ENCODE measurements at regions of chr3 and their contacts with region 1.

Region 1: DNA sequence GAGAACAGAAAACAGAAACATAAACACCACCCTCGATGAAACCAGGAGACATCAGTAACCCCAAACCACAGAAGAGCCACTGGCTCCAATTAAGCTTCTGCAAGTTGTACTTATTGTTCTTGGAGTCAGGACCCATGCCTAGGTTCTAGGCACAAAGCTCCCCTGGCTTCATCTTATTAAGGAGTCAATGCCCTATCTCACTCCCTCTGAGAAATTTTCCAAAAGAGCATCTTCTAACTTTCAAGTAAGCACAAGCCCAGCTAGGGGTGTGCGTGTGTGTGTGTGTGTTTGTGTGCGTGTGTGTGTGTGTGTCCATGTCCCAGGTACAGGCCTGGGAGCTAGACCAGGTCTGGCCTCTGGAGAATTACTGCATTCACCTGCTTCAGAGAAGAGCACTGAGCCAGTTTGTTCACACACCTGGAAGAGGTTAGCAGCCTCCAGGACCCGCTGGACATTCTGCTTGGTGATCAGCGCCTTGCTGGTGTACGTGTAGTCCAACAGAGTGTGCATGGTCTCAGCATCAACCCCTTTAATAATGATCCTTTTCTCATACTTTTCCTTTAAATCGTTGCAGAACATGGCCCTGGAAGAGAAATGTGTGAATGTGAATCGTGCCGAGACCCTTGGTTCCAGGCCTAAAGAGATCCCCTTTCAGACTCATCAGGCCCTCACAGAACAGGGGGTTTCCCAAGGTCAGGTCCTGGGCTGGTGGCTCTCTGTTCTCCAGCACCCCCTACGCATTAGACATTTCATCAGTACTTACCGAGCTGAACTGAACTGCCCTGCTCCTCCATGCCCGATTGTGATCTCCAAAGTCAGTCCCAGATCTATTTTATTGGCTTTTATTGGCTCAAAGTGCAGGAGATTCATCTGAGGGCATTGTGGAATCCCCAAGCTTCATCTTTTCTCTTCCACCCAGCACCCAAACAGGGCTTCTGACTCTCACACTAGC is 27.8 kb downstream of the KLHL6 start:
- DNase-seq: peak; percentile 73
- ATAC-seq: peak; percentile 82
- H3K4me3 ChIP-seq: no peak overlapping the region; the same call in 1 of the 2 replicates
- H3K27ac ChIP-seq: peak overlapping the region; percentile 67
- H3K4me1 ChIP-seq: peaks cover 39% of the 10 kb centered on the region
- H3K27me3 ChIP-seq: no peaks in the 10 kb centered on the region
- CTCF ChIP-seq: no peak
- EP300 ChIP-seq: peak; percentile 93 to 96
- POLR2A ChIP-seq: no peak
- RAD21 ChIP-seq: peak; percentile 16; the same call in 1 of the 2 replicates

Region 2: DNA sequence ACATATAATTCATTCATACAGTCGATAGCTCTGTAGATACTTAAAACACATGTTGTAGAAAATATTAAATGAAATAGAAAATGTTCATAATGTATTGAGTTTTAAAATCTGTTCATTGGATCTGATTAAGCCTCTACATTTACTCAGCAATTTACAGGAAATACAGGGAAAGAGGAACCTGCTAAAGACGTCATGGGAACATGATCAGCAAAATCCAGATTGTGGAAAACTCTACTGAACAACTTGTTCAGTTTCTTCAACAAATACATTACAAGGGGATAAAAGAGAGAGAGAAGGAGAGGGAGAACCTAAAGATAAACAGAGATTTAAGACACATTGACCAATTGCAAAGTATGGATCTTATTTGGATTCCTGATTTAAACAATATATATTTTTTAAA is 18.9 kb before region 1 on chr3:
- CTCF ChIA-PET with region 1: interaction called, 51 read pairs
- POLR2A ChIA-PET with region 1: interaction called, 181 read pairs
- RAD21 ChIA-PET with region 1: interaction called, 245 read pairs
- SMC1A ChIA-PET with region 1: interaction called, 115 read pairs
- in situ Hi-C with region 1: no loop called
- intact Hi-C with region 1: no loop called
- DNase-seq: no peak
- ATAC-seq: no peak
- H3K4me3 ChIP-seq: no peak overlapping the region
- H3K27ac ChIP-seq: no peak overlapping the region
- H3K4me1 ChIP-seq: peaks cover 9% of the 10 kb centered on the region
- H3K27me3 ChIP-seq: no peaks in the 10 kb centered on the region
- CTCF ChIP-seq: no peak
- EP300 ChIP-seq: no peak
- POLR2A ChIP-seq: no peak
- RAD21 ChIP-seq: no peak

Region 3: GRCh38 chr3:183515968-183516851 is 11.5 kb before region 1 on chr3:
- CTCF ChIA-PET with region 1: interaction called, 51 read pairs
- POLR2A ChIA-PET with region 1: interaction called, 181 read pairs
- RAD21 ChIA-PET with region 1: interaction called, 245 read pairs
- SMC1A ChIA-PET with region 1: interaction called, 115 read pairs
- in situ Hi-C with region 1: no loop called
- intact Hi-C with region 1: no loop called
- DNase-seq: peak; percentile 77
- ATAC-seq: peak; percentile 61
- H3K4me3 ChIP-seq: no peak overlapping the region
- H3K27ac ChIP-seq: peak overlapping the region; percentile 7; the same call in 1 of the 2 replicates
- H3K4me1 ChIP-seq: peaks cover 43% of the 10 kb centered on the region
- H3K27me3 ChIP-seq: no peaks in the 10 kb centered on the region
- CTCF ChIP-seq: peak; percentile 15 to 21 (median 20); a peak in 3 of 6 replicates
- EP300 ChIP-seq: peak in 1 of 2 experiments; percentile 91; a peak in 2 of 4 replicates
- POLR2A ChIP-seq: peak; percentile 33; the same call in 1 of the 2 replicates
- RAD21 ChIP-seq: peak; percentile 32

Region 4: DNA sequence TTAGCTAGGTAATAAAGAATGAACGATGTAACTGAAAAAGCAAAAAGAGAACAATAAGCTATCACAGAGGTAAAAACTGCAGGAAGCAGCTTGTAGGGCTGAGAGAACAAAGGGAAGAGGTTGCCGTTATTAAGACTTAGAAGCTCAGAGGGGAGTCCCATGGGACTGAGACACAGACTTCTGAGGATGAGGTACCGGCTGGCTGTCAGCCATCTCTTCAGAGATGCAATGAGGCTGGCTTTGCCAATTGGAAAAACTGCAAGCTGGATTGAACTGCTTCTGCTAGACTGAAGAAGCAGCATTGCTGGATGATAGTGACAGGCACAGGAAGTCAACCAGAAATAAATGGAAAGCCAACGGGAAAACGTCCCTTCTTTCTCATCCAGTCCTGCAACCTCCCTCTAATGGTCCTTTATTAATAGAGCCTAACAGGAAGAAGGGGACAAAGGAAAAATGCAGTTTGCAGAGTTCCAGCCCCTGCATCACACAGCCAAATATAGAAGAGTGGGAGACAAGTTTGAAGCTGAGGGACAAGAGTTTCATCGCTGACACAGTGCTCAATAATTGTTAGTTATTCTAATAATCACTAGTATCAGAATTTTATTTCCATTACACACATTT is 48.9 kb after region 1 on chr3:
- CTCF ChIA-PET with region 1: interaction called, 12 read pairs
- POLR2A ChIA-PET with region 1: interaction called, 10 read pairs
- RAD21 ChIA-PET with region 1: interaction called, 17 read pairs
- SMC1A ChIA-PET with region 1: interaction called, 26 read pairs
- in situ Hi-C with region 1: no loop called
- intact Hi-C with region 1: no loop called
- DNase-seq: no peak
- ATAC-seq: no peak
- H3K4me3 ChIP-seq: no peak overlapping the region
- H3K27ac ChIP-seq: no peak overlapping the region
- H3K4me1 ChIP-seq: peaks cover 8% of the 10 kb centered on the region; the same call in 1 of the 2 replicates
- H3K27me3 ChIP-seq: peaks cover 0 to 21% of the 10 kb centered on the region in 2 experiments; a peak in 2 of 4 replicates
- CTCF ChIP-seq: no peak
- EP300 ChIP-seq: no peak
- POLR2A ChIP-seq: no peak
- RAD21 ChIP-seq: no peak

Region 5: DNA sequence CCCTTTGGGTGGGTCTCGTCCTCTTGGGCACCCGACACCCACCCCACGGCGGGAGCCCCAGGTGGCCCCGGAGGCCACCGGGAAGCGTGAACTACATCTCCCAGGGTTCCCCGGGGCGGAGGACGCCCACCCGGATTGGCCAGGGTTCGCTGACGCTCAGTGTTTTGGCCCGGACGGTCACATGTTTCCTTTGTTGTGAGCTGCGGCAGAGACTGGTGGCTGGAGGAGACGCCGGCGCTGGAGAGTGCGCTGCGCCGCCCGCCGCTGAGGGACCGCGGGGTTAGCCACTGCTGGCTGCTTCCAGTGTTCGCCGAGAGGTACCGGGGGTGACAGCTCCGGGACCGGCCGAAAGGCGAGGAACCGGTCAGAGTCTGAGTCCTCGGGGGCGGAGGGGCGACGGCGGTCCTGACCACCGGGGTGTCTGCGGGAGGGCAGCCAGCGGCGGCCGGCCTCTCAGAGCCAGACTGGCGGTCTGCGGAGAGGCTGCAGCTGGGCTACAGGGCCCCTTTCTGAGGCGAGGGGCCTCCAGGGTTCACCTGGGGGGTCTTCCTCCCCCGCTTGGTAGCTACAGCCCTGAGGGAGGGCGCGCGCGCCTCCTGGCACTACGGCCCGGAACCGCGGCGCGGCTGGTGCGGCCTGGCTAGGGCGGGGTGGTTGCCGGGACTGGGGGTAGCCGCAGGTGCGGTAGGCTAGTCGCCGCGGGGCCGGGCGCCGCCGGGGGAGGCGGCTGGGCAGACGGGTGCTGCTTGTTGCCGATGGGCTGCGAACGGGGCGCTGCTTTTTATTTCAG is 107.9 kb after region 1 on chr3 and contains the start of gene KLHL24:
- CTCF ChIA-PET with region 1: no interaction called
- POLR2A ChIA-PET with region 1: interaction called, 3 read pairs
- RAD21 ChIA-PET with region 1: no interaction called
- SMC1A ChIA-PET with region 1: interaction called, 4 read pairs
- in situ Hi-C with region 1: no loop called
- intact Hi-C with region 1: loop called (anchors 5 kb)
- DNase-seq: peak; percentile 60
- ATAC-seq: peak; percentile 91
- H3K4me3 ChIP-seq: peak within 1 kb of the TSS; percentile 80
- H3K27ac ChIP-seq: peak within 1 kb of the TSS; percentile 77
- H3K4me1 ChIP-seq: peaks cover 19% of the 10 kb centered on the region; the same call in 1 of the 2 replicates
- H3K27me3 ChIP-seq: no peaks in the 10 kb centered on the region; a peak in 1 of 4 replicates
- CTCF ChIP-seq: 0 out of 6 replicates have a peak, but pooled peaks of 1 of the 3 experiments have one; percentile 5
- EP300 ChIP-seq: no peak
- POLR2A ChIP-seq: peak; percentile 90
- RAD21 ChIP-seq: no peak
- polyA plus RNA-seq, gene KLHL24: 0.91 to 1.6 TPM